Activated naive CD4-positive, alpha-beta T cell treated with anti-CD3 and anti-CD28 coated beads for 36 hours (primary cell): ENCODE measurements at regions of chr21 and their contacts with region 1.

Region 1: GRCh38 chr21:45439161-45439872 is 34.4 kb downstream of the COL18A1 start:
- DNase-seq: peak; percentile 90
- H3K4me3 Mint-ChIP-seq: peak overlapping the region; percentile 50
- H3K27ac Mint-ChIP-seq: no peak overlapping the region
- H3K4me1 Mint-ChIP-seq: peaks cover 3% of the 10 kb centered on the region
- H3K27me3 Mint-ChIP-seq: no peaks in the 10 kb centered on the region

Region 2: DNA sequence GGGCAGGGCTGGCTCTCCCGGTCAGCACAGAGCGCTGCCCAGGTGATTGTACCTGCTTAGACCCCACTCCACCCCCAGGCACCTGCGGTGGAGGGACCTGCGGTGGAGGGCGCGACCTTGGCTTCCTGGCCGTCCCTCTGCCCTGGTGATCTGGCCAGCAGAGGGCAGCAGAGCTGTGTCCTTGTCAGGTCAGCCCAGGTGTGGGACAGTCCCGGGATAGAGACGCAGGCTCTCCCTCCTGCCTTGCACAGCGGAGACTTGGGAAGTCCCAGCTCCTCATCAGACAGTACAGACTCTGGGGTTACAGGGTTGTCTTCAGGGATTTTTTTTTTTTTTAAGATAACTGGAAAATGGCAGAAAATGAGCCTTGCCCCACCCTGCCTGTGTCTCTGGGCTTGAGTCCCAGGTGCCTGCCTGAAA is 489.5 kb before region 1 on chr21:
- CTCF ChIA-PET with region 1: no interaction called
- intact Hi-C with region 1: loop called (anchors 1 kb)
- DNase-seq: peak; percentile 92
- H3K4me3 Mint-ChIP-seq: no peak overlapping the region
- H3K27ac Mint-ChIP-seq: no peak overlapping the region
- H3K4me1 Mint-ChIP-seq: peaks cover 17% of the 10 kb centered on the region
- H3K27me3 Mint-ChIP-seq: no peaks in the 10 kb centered on the region

Region 3: DNA sequence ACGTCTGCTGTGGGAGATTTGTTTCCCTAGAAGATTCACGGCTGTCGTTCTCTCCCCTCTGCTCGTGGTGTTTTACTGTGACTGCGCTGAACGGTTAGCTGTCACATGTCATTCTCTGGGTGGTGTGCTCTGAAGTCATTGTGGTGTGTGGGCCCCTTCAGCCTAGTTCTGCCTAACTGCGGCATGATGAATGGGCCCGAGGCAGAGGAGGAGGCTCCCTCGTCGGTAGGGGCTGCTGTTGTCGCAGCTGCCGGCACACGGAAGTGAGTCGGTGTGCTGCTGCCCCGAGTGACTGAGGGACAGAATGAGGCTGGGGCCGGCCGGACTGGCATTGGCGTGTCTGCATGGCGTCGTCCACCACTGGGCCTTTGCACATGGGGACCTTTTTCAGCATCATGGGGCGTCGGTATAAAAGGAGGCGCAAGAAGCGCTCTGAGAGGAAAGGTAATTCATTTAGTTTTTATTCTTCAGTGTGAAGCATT is 287.0 kb before region 1 on chr21:
- CTCF ChIA-PET with region 1: no interaction called
- intact Hi-C with region 1: loop called (anchors 1 kb)
- DNase-seq: peak; percentile 79
- H3K4me3 Mint-ChIP-seq: peak overlapping the region; percentile 50
- H3K27ac Mint-ChIP-seq: no peak overlapping the region
- H3K4me1 Mint-ChIP-seq: peaks cover 32% of the 10 kb centered on the region
- H3K27me3 Mint-ChIP-seq: no peaks in the 10 kb centered on the region

Region 4: DNA sequence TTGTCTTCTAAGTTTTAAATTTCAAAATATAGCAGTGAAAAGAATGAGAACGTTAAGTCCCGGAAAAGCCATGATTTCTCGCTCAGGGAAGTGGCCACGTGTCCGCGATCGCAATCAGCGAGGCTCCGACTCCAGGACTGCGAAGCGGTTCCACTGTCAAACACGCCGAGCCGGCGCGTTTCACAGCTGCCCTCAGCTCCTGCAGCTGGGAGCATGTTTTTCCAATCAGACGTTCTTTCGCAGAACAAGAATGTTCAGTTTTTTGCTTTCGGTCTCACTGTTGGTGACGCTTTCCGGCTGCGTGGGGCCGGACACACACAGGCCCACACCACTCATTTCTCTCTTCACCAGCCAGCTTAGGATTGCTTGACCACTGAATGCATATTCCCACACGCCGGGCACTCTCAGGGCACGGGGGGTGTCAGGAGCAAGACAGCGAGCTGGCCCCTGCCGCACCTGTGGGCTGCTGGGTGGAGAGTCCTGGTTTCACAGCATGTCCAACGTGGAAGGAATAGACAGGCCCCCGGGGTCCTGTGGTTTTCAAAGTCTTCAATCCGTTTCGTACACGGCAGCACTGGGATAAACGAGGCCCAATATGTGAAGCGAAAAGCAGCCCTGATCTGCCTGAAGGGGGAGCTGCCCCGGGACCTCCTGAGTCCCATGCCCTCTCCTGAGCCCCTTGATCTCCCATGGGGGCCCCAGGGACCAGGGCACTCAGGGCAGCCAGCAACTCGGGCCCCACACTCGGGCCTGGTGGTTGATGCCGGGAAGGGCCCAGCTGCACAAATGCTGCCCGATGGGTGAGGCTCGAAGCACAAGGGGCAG is 81.7 kb before region 1 on chr21:
- CTCF ChIA-PET with region 1: no interaction called
- intact Hi-C with region 1: loop called (anchors 5 kb)
- DNase-seq: no peak
- H3K4me3 Mint-ChIP-seq: no peak overlapping the region
- H3K27ac Mint-ChIP-seq: no peak overlapping the region
- H3K4me1 Mint-ChIP-seq: peaks cover 4% of the 10 kb centered on the region
- H3K27me3 Mint-ChIP-seq: peaks cover 10% of the 10 kb centered on the region